ENCODE measurements at regions of chr7 and their contacts with region 1.

Region 1: GRCh38 chr7:76179686-76180085 is 22.0 kb upstream of the SRRM3 start:
- H3K4me3 ChIP-seq: no peak overlapping the region
- H3K27ac ChIP-seq: no peak overlapping the region
- H3K4me1 ChIP-seq: no peaks in the 10 kb centered on the region
- CTCF ChIP-seq: no peak

Region 2: DNA sequence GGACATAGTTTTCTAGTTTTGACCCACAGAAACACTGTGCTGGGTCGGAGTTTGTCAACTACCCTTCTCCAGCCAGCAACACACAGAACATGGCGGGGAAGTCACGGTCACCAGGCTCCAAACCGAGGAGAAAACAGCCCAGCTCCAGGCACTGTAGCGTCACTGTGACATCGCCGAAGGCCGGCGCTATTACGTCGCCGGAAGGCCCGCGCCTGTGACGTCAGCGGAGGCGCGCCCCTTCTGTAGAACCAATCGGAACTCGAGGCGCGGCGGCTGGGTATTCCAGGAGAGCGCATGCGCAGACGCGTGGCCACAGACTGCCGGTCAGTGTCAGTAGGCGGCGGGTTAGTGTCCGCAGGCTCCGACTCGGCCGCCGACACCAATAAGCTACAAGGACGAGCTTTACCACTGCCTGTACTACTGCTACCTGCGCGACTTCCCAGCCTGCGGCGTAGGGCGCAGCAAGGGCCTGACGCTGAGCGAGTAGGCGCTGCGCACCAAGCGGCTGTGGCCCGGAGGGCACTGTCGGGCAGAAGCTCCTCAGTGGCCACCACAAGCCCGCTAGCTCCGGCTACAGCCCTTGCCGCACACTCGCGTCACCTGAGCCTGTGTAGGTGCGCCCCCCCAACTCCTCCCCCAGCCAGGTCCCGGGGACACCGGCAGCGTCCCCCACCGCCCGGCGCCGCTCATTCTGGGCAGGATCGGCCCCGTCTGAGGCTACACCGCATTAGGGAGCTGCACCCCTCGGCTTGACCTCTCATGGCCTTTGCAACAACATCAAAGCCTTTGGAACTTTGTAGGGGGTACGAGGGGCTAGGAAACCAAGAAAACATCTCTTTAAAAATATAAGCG is 13.1 kb before region 1 on chr7:
- CTCF ChIA-PET with region 1: interaction called, 13 read pairs
- POLR2A ChIA-PET with region 1: interaction called, 5 read pairs
- H3K4me3 ChIP-seq: peak overlapping the region; percentile 88
- H3K27ac ChIP-seq: peak overlapping the region; percentile 17; the same call in 1 of the 2 replicates
- H3K4me1 ChIP-seq: no peaks in the 10 kb centered on the region
- CTCF ChIP-seq: peak; percentile 37

Region 3: GRCh38 chr7:76209310-76209709 is 29.6 kb after region 1 on chr7:
- CTCF ChIA-PET with region 1: no interaction called
- POLR2A ChIA-PET with region 1: no interaction called
- H3K4me3 ChIP-seq: no peak overlapping the region
- H3K27ac ChIP-seq: no peak overlapping the region
- H3K4me1 ChIP-seq: no peaks in the 10 kb centered on the region
- CTCF ChIP-seq: no peak

Region 4: GRCh38 chr7:76302347-76303201 is 122.9 kb after region 1 on chr7 and contains the start of gene HSPB1:
- CTCF ChIA-PET with region 1: interaction called, 24 read pairs
- POLR2A ChIA-PET with region 1: interaction called, 3 read pairs
- H3K4me3 ChIP-seq: peak within 1 kb of the TSS; percentile 37
- H3K27ac ChIP-seq: peak within 1 kb of the TSS; percentile 35; the same call in 1 of the 2 replicates
- H3K4me1 ChIP-seq: peaks cover 2% of the 10 kb centered on the region; the same call in 1 of the 2 replicates
- CTCF ChIP-seq: 0 out of 2 replicates have a peak, but pooled peaks have one; percentile 31